CD4-positive, alpha-beta T cell (primary cell): ENCODE measurements at regions of chr19 and their contacts with region 1.

Region 1: GRCh38 chr19:29831041-29831548 is 19.3 kb downstream of the CCNE1 start:
- DNase-seq: peak; percentile 45 to 87 (median 62)
- ATAC-seq: peak; percentile 98
- H3K4me3 ChIP-seq: peak overlapping the region; percentile 15
- H3K4me3 Mint-ChIP-seq: peak overlapping the region; percentile 72
- H3K27ac ChIP-seq: peak overlapping the region; percentile 56 to 59
- H3K27ac Mint-ChIP-seq: peak overlapping the region; percentile 93
- H3K4me1 ChIP-seq: peaks cover 37% of the 10 kb centered on the region
- H3K4me1 Mint-ChIP-seq: peaks cover 45% of the 10 kb centered on the region
- H3K27me3 ChIP-seq: no peaks in the 10 kb centered on the region
- H3K27me3 Mint-ChIP-seq: no peaks in the 10 kb centered on the region
- CTCF ChIP-seq: no peak

Region 2: DNA sequence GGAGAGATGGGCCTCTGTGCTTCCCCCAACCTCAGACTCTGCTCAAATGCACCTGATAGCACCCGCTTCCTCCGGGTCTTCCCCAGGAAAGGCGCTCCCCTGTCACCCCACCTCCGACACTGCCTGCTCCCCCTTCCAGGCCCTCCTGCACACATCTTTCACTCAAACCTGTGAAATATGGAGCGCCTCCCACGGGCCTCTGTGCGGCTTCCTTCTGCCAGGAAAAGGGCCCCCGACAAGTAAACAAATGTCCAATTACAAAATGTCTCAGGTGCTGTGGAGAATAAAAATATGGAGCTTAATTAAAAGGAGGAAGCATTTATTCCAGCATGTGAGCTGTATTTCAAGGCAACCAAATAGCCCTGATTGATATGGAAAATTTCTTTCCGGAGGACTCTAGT is 34.9 kb before region 1 on chr19:
- CTCF ChIA-PET with region 1: no interaction called
- POLR2A ChIA-PET with region 1: no interaction called
- intact Hi-C with region 1: no loop called
- DNase-seq: no peak
- ATAC-seq: no peak
- H3K4me3 ChIP-seq: no peak overlapping the region
- H3K4me3 Mint-ChIP-seq: no peak overlapping the region
- H3K27ac ChIP-seq: no peak overlapping the region
- H3K27ac Mint-ChIP-seq: no peak overlapping the region
- H3K4me1 ChIP-seq: no peaks in the 10 kb centered on the region
- H3K4me1 Mint-ChIP-seq: no peaks in the 10 kb centered on the region
- H3K27me3 ChIP-seq: no peaks in the 10 kb centered on the region
- H3K27me3 Mint-ChIP-seq: no peaks in the 10 kb centered on the region
- CTCF ChIP-seq: no peak

Region 3: DNA sequence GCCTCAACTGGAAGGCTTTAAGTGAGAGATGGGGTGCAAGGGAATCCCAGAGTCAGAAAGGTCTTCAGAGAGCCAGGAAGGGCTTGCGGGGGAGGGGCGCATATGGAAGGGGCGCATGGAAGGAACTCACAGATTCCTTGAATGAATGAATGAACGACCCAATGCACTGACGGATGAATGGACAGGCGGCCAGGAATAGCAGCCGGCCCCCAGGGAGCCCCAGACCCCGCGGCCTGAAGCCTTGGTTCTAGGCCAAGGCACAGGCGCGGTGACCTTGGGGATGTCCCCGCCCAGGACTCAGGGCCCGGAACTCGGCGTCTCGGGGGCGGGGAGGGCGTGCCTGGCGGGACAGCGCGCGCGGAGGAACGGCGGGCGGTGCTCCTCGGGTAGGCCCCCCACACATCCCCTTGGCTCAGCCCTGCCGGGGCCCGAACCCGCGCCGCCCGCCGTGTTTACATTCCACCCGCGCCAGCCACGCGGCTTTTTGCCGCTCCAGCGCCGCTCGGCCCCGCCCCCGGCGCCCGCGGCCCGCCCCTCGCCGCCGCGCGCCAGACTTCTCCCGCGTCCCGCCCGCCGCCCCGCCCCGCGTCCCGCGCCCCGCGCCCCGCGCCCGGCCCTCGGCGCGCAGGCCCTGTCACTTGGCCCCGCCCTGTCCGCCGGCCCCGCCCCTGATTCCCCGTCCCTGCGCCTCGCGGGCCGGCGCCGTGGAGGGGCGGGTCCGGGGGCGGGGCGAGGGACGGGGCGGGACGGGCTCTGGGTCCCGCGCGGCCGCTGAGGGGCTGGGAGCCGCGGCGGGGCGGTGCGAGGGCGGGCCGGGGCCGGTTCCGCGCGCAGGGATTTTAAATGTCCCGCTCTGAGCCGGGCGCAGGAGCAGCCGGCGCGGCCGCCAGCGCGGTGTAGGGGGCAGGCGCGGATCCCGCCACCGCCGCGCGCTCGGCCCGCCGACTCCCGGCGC is 19.7 kb before region 1 on chr19 and contains the start of gene CCNE1:
- CTCF ChIA-PET with region 1: no interaction called
- POLR2A ChIA-PET with region 1: interaction called, 7 read pairs
- intact Hi-C with region 1: loop called in 1 of 2 experiments (anchors 2 kb)
- DNase-seq: peak; percentile 88 to 100 (median 94)
- ATAC-seq: peak; percentile 90
- H3K4me3 ChIP-seq: peak within 1 kb of the TSS; percentile 58
- H3K4me3 Mint-ChIP-seq: peak within 1 kb of the TSS; percentile 96
- H3K27ac ChIP-seq: peak within 1 kb of the TSS; percentile 50 to 55
- H3K27ac Mint-ChIP-seq: peak within 1 kb of the TSS; percentile 82
- H3K4me1 ChIP-seq: peaks cover 14% of the 10 kb centered on the region
- H3K4me1 Mint-ChIP-seq: peaks cover 11% of the 10 kb centered on the region
- H3K27me3 ChIP-seq: no peaks in the 10 kb centered on the region
- H3K27me3 Mint-ChIP-seq: no peaks in the 10 kb centered on the region
- CTCF ChIP-seq: no peak
- total RNA-seq, gene CCNE1: 4.9 to 5.6 TPM